HCT116 (cell line): ENCODE measurements at regions of chr2 and their contacts with region 1.

Region 1: GRCh38 chr2:178450774-178451525 is at the starts of genes PJVK and PRKRA:
- DNase-seq: peak; percentile 91
- ATAC-seq: peak; percentile 92
- H3K4me3 ChIP-seq: peak within 1 kb of the TSS; percentile 72 to 93
- H3K27ac ChIP-seq: peak within 1 kb of the TSS; percentile 86
- H3K4me1 ChIP-seq: peaks cover 12 to 20% of the 10 kb centered on the region in 2 experiments; a peak in 2 of 4 replicates
- H3K27me3 ChIP-seq: no peaks in the 10 kb centered on the region
- CTCF ChIP-seq: no peak
- POLR2A ChIP-seq: peak; percentile 65
- RAD21 ChIP-seq: no peak
- total RNA-seq, gene PJVK: 2.6 TPM
- total RNA-seq, gene PRKRA: 49.8 TPM

Region 2: DNA sequence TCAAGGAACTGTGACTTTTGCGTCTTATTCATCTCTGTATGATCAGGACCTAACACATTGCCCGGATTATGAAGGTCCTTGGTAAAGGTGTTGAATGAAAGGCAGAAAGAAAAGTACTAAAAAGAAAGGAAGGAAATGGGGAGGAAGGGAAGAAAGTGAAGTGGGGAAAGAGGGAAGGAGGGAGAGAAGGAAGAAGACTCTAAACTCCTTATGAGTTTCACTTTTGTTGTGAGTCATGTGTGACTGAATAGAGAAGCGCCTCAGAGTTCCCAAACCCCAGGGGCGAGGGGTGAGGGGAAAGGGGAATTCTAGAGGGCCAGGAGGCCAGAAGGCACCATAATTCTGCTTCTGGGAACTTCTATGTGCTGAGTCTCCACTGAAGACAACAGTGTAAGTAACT is 287.6 kb before region 1 on chr2:
- CTCF ChIA-PET with region 1: no interaction called
- POLR2A ChIA-PET with region 1: no interaction called
- RAD21 ChIA-PET with region 1: no interaction called
- intact Hi-C with region 1: no loop called
- DNase-seq: no peak
- ATAC-seq: no peak
- H3K4me3 ChIP-seq: no peak overlapping the region
- H3K27ac ChIP-seq: no peak overlapping the region
- H3K4me1 ChIP-seq: no peaks in the 10 kb centered on the region
- H3K27me3 ChIP-seq: no peaks in the 10 kb centered on the region
- CTCF ChIP-seq: no peak
- POLR2A ChIP-seq: no peak
- RAD21 ChIP-seq: no peak

Region 3: DNA sequence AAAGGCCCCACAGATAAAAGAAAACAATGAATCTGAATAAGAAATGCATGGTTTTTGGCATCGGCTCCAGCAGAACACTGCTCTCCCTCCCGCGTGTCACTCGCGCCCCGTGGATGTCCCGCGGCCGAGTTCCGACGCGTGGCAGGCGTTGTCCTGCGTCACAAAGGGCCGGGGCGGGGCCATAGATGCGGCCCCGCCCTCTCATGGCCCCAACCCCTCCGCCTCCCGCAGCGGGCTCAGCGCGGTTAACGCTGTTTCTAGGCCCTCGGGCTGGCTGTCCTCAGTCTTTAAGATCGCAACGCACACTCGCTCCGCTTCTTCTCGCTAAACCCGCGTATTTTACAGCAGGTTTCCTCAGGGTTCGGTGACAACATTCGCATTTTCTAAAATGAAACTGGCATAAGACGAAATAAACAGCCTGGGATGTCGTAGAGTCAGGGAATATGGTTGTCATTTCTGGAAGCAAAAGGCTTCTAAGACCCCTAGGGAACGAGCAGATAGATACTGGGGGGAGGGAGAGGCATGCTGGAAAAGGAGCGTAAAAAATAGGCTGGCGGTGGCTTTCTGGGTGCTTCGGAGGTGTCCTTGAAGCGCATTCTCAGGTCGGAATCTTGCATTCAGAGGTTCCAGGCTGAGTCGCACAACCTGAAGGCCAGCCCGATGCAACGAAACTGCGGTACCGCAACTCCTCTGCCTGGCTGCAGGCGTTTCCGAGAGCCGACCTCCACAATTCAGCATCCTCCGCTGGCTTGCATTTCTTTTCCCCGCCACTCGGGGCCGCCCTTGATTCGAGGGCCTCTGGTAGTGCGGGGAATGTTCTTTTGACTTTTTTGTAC is 27.7 kb after region 1 on chr2 and contains the start of gene FKBP7:
- CTCF ChIA-PET with region 1: no interaction called
- POLR2A ChIA-PET with region 1: interaction called, 5 read pairs
- RAD21 ChIA-PET with region 1: no interaction called
- intact Hi-C with region 1: loop called (anchors 1 kb)
- DNase-seq: peak; percentile 60
- ATAC-seq: peak; percentile 56
- H3K4me3 ChIP-seq: peak within 1 kb of the TSS; percentile 75 to 92
- H3K27ac ChIP-seq: peak within 1 kb of the TSS; percentile 64
- H3K4me1 ChIP-seq: peaks cover 10 to 30% of the 10 kb centered on the region in 2 experiments; a peak in 3 of 4 replicates
- H3K27me3 ChIP-seq: no peaks in the 10 kb centered on the region
- CTCF ChIP-seq: peak; percentile 55 to 77 (median 68); a peak in 5 of 6 replicates
- POLR2A ChIP-seq: peak; percentile 60
- RAD21 ChIP-seq: peak; percentile 76
- total RNA-seq, gene FKBP7: 4.5 TPM

Region 4: GRCh38 chr2:178491612-178492011 is 40.7 kb after region 1 on chr2:
- CTCF ChIA-PET with region 1: no interaction called
- POLR2A ChIA-PET with region 1: no interaction called
- RAD21 ChIA-PET with region 1: no interaction called
- intact Hi-C with region 1: no loop called
- DNase-seq: no peak
- ATAC-seq: no peak
- H3K4me3 ChIP-seq: no peak overlapping the region
- H3K27ac ChIP-seq: no peak overlapping the region
- H3K4me1 ChIP-seq: no peaks in the 10 kb centered on the region
- H3K27me3 ChIP-seq: no peaks in the 10 kb centered on the region
- CTCF ChIP-seq: no peak
- POLR2A ChIP-seq: no peak
- RAD21 ChIP-seq: no peak